CD4-positive, alpha-beta memory T cell (primary cell): ENCODE measurements at regions of chr1 and their contacts with region 1.

Region 1: DNA sequence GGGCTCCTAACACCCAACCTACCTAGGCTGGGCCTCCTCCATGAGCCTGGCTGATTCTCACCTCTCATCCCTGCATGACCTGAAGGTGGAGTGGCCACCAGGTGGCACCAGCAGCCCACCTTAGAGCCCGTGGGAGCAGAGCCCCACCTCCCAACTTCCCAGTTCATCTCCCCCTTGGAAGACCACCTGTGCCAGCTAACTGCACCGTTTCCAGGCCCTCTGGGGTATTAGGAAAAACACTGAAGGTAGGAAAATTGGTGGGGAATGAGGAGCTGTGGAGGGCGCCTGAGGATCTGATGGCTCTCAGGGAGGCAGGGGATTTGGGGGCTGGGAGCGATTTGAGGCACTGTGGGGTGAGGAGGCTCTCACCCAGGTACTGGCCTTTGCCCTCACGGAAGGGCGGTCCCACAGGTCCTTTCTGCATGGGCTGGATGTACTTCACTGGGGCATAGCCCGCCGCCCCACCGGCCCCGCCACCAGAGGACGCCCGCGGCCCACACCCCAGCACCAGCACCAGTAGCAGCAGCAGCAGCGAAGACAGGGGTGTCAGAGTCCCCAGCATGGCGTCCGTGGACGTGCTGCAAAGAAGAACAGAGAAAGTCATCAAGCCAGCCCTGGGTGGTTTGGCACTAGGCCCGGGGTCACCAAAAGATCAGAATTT is 11.1 kb downstream of the ADPRS start:
- DNase-seq: peak; percentile 62 to 71 (median 70)
- H3K4me3 ChIP-seq: no peak overlapping the region
- H3K4me3 Mint-ChIP-seq: peak overlapping the region in 2 of 8 donors; percentile 26 to 39
- H3K27ac ChIP-seq: no peak overlapping the region
- H3K27ac Mint-ChIP-seq: peak overlapping the region in 1 of 7 donors; percentile 50
- H3K4me1 ChIP-seq: no peaks in the 10 kb centered on the region
- H3K4me1 Mint-ChIP-seq: peaks cover 0 to 4% (median under 1%) of the 10 kb centered on the region in 4 donors
- H3K27me3 ChIP-seq: no peaks in the 10 kb centered on the region
- H3K27me3 Mint-ChIP-seq: no peaks in the 10 kb centered on the region

Region 2: DNA sequence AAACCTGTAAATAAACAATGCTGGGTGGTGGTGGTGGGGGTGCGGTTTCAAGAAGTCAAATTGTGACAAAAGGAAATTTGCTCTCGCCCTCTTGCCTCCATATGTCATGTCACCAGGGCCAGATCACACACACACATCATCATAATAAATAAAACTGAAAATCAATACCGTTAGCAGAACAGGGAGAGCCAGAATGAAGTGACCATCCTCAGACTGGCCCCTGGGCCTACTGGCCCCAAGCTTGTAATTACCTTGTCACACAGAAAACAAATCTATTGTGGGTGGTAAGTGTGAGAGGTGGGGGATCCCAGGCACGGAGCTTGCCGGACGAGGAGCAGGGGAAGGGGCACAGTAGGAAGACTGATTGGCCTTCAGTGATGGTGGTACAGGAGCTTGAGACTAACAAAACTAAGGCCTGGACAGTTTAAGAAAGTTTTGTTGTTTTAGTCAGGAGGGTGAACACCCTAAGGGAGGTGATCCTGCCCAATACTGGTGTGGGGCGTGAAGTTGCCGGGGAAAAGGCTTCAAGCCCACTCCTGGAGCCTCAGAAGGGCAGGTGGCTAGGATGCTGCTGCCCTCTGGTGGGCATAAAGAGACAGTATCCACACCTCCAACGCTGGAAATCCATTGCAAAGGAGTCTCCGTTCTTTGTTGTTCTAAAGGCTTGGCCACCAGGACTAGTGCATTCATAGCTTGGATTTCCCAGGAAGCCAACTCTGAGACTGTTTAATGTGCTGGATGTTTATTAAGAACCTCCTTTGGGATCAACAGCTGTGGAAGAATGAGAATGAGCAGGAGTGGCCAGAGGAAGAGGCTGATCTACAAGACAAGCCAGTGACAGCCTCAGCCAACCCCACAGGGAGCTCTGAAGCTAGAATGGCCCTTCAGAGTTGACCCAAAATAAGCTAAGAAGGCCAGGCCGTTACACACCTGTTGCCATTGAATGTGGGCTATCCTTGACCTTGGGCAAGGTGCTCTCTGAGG is 373.1 kb before region 1 on chr1:
- CTCF ChIA-PET with region 1: no interaction called
- POLR2A ChIA-PET with region 1: no interaction called
- intact Hi-C with region 1: no loop called
- DNase-seq: peak; percentile 43 to 59 (median 57)
- H3K4me3 ChIP-seq: no peak overlapping the region
- H3K4me3 Mint-ChIP-seq: no peak overlapping the region
- H3K27ac ChIP-seq: no peak overlapping the region
- H3K27ac Mint-ChIP-seq: peak overlapping the region in 2 of 7 donors; percentile 35 to 37
- H3K4me1 ChIP-seq: peaks cover 4% of the 10 kb centered on the region
- H3K4me1 Mint-ChIP-seq: peaks cover 0 to 6% (median 4%) of the 10 kb centered on the region in 4 donors
- H3K27me3 ChIP-seq: no peaks in the 10 kb centered on the region
- H3K27me3 Mint-ChIP-seq: no peaks in the 10 kb centered on the region

Region 3: DNA sequence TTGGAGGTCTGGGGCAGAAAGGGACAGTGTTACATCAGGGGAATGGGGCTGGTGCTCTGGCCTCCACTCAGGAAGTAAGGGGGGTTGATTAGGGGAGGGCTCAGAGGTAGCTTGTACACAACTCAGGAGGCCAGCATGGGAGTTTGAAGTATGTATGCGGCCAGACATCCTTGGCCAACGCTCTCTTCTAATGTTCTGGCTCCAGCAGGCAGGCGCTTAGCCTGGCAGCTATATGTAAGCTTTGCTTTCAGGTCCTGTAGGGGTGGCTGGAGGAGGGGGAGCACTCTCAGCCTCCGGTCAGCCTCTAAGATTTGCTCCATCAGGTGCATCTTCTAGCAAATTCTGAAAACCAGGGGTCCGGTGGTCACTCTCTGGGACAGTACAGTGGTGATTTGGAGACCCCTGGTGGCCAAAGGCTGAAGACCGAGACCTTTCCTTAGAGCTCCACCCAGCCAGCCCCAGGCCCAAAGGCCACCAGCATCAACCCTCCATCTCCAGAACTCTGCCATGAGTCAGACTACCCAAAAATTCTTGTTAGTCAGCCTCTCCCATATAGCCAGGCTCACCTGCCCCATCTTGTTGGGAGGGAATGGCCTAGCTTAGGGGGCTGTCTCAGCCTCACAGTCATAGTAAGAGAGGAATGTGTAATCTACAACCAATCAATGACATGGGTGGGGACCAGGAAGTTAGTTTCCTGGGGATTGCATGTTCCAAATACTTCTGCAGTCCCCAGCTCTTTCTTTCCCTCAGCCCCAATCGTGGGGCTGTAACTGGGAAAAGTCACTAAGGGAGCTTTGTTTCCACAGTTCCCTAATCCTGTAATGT is 34.9 kb after region 1 on chr1:
- CTCF ChIA-PET with region 1: interaction called, 34 read pairs
- POLR2A ChIA-PET with region 1: interaction called, 7 read pairs
- intact Hi-C with region 1: loop called (anchors 1 kb)
- DNase-seq: no peak
- H3K4me3 ChIP-seq: no peak overlapping the region
- H3K4me3 Mint-ChIP-seq: no peak overlapping the region
- H3K27ac ChIP-seq: no peak overlapping the region
- H3K27ac Mint-ChIP-seq: peak overlapping the region in 6 of 7 donors; percentile 3 to 90 (median 64)
- H3K4me1 ChIP-seq: no peaks in the 10 kb centered on the region
- H3K4me1 Mint-ChIP-seq: peaks cover 0 to 6% (median 3%) of the 10 kb centered on the region in 4 donors
- H3K27me3 ChIP-seq: no peaks in the 10 kb centered on the region
- H3K27me3 Mint-ChIP-seq: no peaks in the 10 kb centered on the region

Region 4: GRCh38 chr1:36420836-36421664 is 321.2 kb after region 1 on chr1:
- CTCF ChIA-PET with region 1: interaction called, 4 read pairs
- POLR2A ChIA-PET with region 1: no interaction called
- intact Hi-C with region 1: loop called (anchors 1 kb)
- DNase-seq: peak; percentile 83 to 88 (median 86)
- H3K4me3 ChIP-seq: no peak overlapping the region
- H3K4me3 Mint-ChIP-seq: peak overlapping the region; percentile 49 to 84 (median 74)
- H3K27ac ChIP-seq: peak overlapping the region; percentile 30
- H3K27ac Mint-ChIP-seq: peak overlapping the region; percentile 82 to 97 (median 94)
- H3K4me1 ChIP-seq: peaks cover 21% of the 10 kb centered on the region
- H3K4me1 Mint-ChIP-seq: peaks cover 19 to 29% (median 22%) of the 10 kb centered on the region in 4 donors
- H3K27me3 ChIP-seq: no peaks in the 10 kb centered on the region
- H3K27me3 Mint-ChIP-seq: no peaks in the 10 kb centered on the region